Natural killer cell (primary cell): ENCODE measurements at regions of chr15 and their contacts with region 1.

Region 1: GRCh38 chr15:84658080-84658787 is at the start of gene NMB:
- DNase-seq: peak; percentile 78 to 92
- ATAC-seq: peak; percentile 72 to 87 (median 79)
- H3K4me3 ChIP-seq: peak within 1 kb of the TSS; percentile 43
- H3K4me3 Mint-ChIP-seq: peak within 1 kb of the TSS; percentile 89
- H3K27ac ChIP-seq: peak within 1 kb of the TSS; percentile 45
- H3K27ac Mint-ChIP-seq: peak within 1 kb of the TSS; percentile 76 to 81
- H3K4me1 ChIP-seq: peaks cover 31% of the 10 kb centered on the region
- H3K4me1 Mint-ChIP-seq: peaks cover 39 to 48% of the 10 kb centered on the region in 2 donors
- H3K27me3 ChIP-seq: no peaks in the 10 kb centered on the region
- H3K27me3 Mint-ChIP-seq: no peaks in the 10 kb centered on the region
- CTCF ChIP-seq: peak; percentile 69
- total RNA-seq, gene NMB: 3.8 to 6.4 (median 5.1) TPM

Region 2: DNA sequence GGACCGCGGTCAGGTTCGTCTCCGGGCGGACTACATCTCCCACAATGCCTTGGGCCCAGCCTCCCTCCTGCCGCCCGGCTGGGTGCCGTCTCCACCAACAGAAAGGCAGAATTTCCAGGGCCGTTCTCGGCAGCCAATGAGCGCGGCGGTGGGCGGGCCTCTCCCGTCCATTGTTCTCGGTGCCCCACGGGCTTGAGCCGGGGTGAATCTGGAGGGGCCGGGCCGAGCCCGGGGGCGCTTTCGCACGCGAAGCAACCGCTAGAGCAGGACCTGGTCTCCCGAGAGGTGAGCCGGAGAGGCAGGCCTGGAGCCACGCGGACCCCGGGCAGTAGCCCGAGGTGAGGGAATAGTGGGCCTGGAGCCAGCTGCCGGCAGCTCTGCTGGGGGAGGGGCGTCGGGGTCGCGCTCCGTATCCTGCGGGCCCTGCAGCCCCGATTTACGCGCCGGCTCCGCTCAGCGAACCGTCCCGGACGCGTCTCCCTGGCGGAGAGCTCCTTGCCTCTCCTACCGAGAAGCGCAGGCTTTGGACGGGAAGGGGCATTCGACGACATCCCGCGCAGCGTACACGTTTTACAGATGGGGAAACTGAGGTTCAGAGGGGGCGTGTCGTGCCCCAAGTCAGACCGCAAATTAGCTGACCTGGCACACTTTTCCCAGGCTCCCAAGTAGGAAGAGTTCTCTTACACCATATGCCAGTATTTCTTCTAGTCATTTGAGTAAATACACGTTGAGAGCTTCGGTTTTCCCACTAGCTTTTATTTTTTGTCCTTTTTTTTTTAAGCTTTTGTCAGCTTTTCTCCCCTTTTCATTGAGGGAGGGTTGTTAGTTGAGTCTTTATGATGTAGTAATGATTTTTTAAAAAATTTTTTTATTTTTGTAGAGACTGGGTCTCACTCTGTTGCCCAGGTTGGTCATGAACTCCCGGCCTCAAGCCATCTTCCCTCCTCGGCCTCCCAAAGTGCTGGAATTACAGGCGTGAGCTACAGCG is 57.1 kb before region 1 on chr15 and contains the start of gene ZSCAN2:
- intact Hi-C with region 1: loop called (anchors 2 kb)
- DNase-seq: peak; percentile 92 to 94
- ATAC-seq: peak; percentile 97 to 99 (median 99)
- H3K4me3 ChIP-seq: peak within 1 kb of the TSS; percentile 86
- H3K4me3 Mint-ChIP-seq: peak within 1 kb of the TSS; percentile 95
- H3K27ac ChIP-seq: peak within 1 kb of the TSS; percentile 6
- H3K27ac Mint-ChIP-seq: peak within 1 kb of the TSS; percentile 83 to 94
- H3K4me1 ChIP-seq: peaks cover 39% of the 10 kb centered on the region
- H3K4me1 Mint-ChIP-seq: peaks cover 45 to 52% of the 10 kb centered on the region in 2 donors
- H3K27me3 ChIP-seq: no peaks in the 10 kb centered on the region
- H3K27me3 Mint-ChIP-seq: no peaks in the 10 kb centered on the region
- CTCF ChIP-seq: no peak
- total RNA-seq, gene ZSCAN2: 5.0 to 8.3 (median 5.5) TPM

Region 3: GRCh38 chr15:84633311-84634227 is 24.7 kb before region 1 on chr15:
- intact Hi-C with region 1: loop called (anchors 1 kb)
- DNase-seq: peak; percentile 55 to 79
- ATAC-seq: peak; percentile 39 to 73 (median 57)
- H3K4me3 ChIP-seq: peak overlapping the region; percentile 47
- H3K4me3 Mint-ChIP-seq: peak overlapping the region; percentile 99
- H3K27ac ChIP-seq: peak overlapping the region; percentile 74
- H3K27ac Mint-ChIP-seq: peak overlapping the region; percentile 88 to 95
- H3K4me1 ChIP-seq: peaks cover 29% of the 10 kb centered on the region
- H3K4me1 Mint-ChIP-seq: peaks cover 44 to 45% of the 10 kb centered on the region in 2 donors
- H3K27me3 ChIP-seq: no peaks in the 10 kb centered on the region
- H3K27me3 Mint-ChIP-seq: no peaks in the 10 kb centered on the region
- CTCF ChIP-seq: no peak

Region 4: DNA sequence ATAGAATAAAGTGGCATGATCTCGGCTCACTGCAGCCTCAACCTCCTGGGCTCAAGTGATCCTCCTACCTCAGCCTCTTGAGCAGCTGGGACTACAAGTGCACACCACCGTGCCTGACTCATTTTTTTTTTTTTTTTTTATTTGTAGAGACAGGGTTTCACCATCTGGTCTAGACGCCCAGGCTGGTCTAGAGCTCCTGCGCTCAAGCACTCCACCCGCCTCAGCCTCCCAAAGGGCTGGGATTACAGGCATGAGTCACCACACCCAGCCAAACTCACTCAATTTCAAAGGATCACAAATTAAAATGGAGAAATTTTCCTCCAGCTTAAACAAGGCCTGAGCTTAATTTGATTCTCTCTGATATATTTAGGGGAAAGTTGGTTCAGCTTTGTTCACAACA is 27.1 kb after region 1 on chr15:
- intact Hi-C with region 1: no loop called
- DNase-seq: no peak
- ATAC-seq: no peak
- H3K4me3 ChIP-seq: no peak overlapping the region
- H3K4me3 Mint-ChIP-seq: no peak overlapping the region
- H3K27ac ChIP-seq: no peak overlapping the region
- H3K27ac Mint-ChIP-seq: no peak overlapping the region
- H3K4me1 ChIP-seq: no peaks in the 10 kb centered on the region
- H3K4me1 Mint-ChIP-seq: peaks cover 8 to 14% of the 10 kb centered on the region in 2 donors
- H3K27me3 ChIP-seq: no peaks in the 10 kb centered on the region
- H3K27me3 Mint-ChIP-seq: no peaks in the 10 kb centered on the region
- CTCF ChIP-seq: no peak

Region 5: DNA sequence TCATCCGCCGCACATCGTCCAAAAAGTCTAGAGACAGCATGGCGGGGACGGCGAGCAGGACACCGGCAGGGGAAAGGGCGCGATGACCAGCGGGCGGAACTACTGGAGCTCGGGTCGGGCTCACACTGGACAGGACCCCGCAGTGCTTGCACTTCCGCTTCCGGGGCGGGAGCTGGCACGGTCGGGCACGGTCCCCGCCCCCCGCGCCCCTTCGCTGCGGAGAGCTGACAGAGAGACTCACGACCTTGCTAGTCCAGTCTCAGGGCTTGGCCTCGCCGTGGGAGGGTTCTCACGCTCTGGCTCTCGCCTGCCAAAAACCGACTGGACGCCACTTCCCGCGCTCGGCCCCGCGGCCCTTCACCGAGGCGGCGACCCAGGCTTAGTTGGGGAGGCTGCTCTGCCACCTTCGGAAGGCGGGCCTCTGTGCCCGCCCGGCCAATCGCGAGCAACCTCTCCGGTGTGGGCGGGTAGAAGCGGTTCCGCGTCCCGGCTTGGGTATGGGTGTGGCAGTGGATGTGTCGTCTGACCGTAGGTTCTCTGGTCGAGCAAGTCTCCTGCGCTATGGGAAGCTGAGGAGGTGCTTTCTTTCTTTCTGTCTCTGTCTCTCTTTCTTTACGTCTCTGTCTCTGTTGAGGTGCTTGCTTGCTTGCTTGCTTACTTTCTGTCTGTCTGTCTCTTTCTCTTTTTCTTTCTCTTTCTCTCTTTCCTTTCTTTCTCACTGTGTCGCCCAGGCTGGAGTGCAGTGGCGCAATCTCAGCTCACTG is 58.0 kb after region 1 on chr15 and contains the start of gene SEC11A:
- intact Hi-C with region 1: loop called (anchors 2 kb)
- DNase-seq: peak; percentile 93
- ATAC-seq: peak; percentile 94 to 98 (median 95)
- H3K4me3 ChIP-seq: peak within 1 kb of the TSS; percentile 96
- H3K4me3 Mint-ChIP-seq: peak within 1 kb of the TSS; percentile 96
- H3K27ac ChIP-seq: peak within 1 kb of the TSS; percentile 91
- H3K27ac Mint-ChIP-seq: peak within 1 kb of the TSS; percentile 92 to 97
- H3K4me1 ChIP-seq: peaks cover 15% of the 10 kb centered on the region
- H3K4me1 Mint-ChIP-seq: peaks cover 34 to 44% of the 10 kb centered on the region in 2 donors
- H3K27me3 ChIP-seq: no peaks in the 10 kb centered on the region
- H3K27me3 Mint-ChIP-seq: no peaks in the 10 kb centered on the region
- CTCF ChIP-seq: no peak
- total RNA-seq, gene SEC11A: 78.7 to 89.3 (median 81.8) TPM

Region 6: DNA sequence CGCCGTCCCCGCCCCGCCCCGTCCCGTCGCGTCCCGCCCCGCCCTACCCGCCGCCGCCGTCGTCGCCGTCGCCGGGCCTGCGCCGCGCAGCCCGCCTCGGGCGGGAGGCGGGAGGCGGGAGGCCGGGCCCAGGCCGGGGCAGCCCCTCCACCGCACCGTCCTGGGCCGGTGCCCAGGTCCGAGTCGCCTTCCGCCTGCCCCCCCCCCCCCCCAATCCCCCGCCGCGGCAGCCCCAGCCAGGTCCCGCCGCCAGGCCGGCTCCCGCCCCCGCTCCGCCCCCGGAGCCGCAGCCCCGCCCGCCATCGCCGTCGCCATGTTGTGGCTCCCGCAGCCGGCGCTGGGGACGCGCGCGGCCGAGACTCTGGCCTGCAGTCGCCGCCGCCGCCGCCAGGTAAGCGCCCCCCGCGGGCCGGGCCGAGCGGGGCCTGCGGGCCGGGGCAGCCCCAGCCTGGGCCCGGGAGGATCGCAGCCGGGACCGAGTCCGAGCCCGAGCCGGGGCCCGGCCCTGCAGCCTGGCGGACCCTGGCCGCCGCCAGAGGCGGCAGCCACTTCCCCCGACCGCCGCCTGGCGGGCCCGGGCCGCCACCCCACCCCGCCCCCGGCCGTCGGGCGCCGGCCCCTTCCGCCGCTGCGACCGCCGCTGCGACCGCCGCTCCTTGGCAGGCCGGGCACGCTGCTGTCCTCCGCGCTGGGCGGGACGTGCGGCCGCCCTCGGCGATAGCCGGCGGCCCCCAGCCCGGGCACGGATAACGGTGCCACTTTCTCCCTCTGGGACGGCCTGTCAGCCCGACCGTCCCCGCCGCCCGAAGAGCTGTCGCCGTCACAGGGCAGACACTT is 90.3 kb after region 1 on chr15 and contains the start of gene ZNF592:
- intact Hi-C with region 1: loop called (anchors 2 kb)
- DNase-seq: peak; percentile 82 to 88
- ATAC-seq: peak; percentile 65 to 82 (median 76)
- H3K4me3 ChIP-seq: peak within 1 kb of the TSS; percentile 87
- H3K4me3 Mint-ChIP-seq: peak within 1 kb of the TSS; percentile 96
- H3K27ac ChIP-seq: peak within 1 kb of the TSS; percentile 87
- H3K27ac Mint-ChIP-seq: peak within 1 kb of the TSS; percentile 96 to 99
- H3K4me1 ChIP-seq: peaks cover 36% of the 10 kb centered on the region
- H3K4me1 Mint-ChIP-seq: peaks cover 57 to 63% of the 10 kb centered on the region in 2 donors
- H3K27me3 ChIP-seq: no peaks in the 10 kb centered on the region
- H3K27me3 Mint-ChIP-seq: no peaks in the 10 kb centered on the region
- CTCF ChIP-seq: no peak
- total RNA-seq, gene ZNF592: 38.0 to 43.8 (median 39.1) TPM

Region 7: DNA sequence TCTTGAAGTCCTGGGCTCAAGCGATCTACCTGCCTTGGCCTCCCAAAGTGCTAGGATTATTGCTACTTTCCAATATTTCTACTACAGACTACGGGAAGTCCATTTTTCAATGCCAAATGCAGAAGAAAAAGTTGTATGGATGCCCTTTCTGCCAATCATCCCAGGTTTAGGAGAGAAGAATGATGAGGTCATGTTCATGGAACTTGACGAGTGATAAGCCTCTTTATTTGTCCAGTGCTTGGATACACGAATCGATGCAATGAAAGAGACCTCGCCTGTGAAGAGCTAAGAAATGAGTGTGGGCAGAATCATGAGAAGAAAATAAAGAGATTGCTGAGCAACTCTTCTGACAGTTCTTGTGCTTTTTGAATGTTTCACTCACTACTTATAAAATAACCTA is 225.2 kb after region 1 on chr15:
- intact Hi-C with region 1: loop called (anchors 2 kb)
- DNase-seq: no peak
- ATAC-seq: no peak
- H3K4me3 ChIP-seq: no peak overlapping the region
- H3K4me3 Mint-ChIP-seq: no peak overlapping the region
- H3K27ac ChIP-seq: no peak overlapping the region
- H3K27ac Mint-ChIP-seq: no peak overlapping the region
- H3K4me1 ChIP-seq: no peaks in the 10 kb centered on the region
- H3K4me1 Mint-ChIP-seq: no peaks in the 10 kb centered on the region
- H3K27me3 ChIP-seq: no peaks in the 10 kb centered on the region
- H3K27me3 Mint-ChIP-seq: peaks cover 0 to 2% of the 10 kb centered on the region in 2 donors
- CTCF ChIP-seq: no peak